Endothelial cell of umbilical vein (primary cell): ENCODE measurements at regions of chr4 and their contacts with region 1.

Region 1: DNA sequence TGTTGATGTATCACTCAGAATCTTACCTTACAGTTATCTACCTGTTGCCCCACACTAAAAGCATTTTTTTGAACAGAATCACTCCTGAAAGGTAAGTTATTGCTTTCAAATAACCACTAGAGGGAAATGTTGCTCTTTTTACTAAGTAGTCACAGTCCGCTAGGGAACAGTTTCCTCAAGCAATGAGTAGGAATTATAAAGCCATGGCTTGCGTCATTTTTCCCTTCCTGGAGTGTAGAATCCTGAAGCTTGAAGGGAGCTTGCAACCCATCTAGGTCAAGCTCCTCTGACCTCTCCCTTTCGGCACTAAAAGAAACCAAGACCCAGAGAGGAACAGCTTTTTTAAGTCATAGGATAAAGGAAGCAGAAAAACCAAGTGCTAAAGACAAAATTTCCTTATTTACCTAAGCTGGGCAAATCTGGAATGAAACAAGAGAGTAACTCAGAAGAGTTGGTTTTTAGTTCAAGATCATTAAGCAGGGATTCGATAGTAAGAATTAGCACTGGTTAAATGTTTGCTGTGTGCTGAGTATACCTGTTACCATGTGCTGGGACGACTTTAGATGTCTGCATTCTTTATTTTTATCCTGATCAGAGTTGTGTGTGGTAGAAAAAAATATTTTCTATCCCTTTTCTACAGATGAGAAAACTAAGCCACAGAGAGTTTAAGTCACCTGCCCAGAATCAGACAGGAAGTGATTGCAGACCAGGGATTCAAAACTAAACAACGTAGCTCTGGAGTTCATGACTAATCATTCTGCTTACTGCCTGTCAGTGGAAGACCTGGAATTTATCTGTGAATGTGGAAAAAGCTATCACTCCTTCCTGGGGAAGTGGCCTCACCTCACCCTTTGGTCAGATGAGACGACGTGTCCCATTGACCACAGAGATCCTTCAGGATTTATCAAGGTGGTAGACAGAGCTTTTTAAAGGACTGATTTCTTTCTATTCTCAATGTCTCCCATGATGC is 631.5 kb downstream of the RAB28 start:
- DNase-seq: peak; percentile 49
- H3K4me3 ChIP-seq: no peak overlapping the region
- H3K27ac ChIP-seq: no peak overlapping the region
- H3K4me1 ChIP-seq: no peaks in the 10 kb centered on the region
- H3K27me3 ChIP-seq: no peaks in the 10 kb centered on the region
- CTCF ChIP-seq: peak in 1 of 2 donors; percentile 25
- POLR2A ChIP-seq: no peak

Region 2: GRCh38 chr4:13541720-13542576 is 689.3 kb after region 1 on chr4:
- CTCF ChIA-PET with region 1: interaction called, 27 read pairs
- POLR2A ChIA-PET with region 1: no interaction called
- dilution Hi-C with region 1: no loop called
- intact Hi-C with region 1: no loop called
- DNase-seq: no peak
- H3K4me3 ChIP-seq: no peak overlapping the region
- H3K27ac ChIP-seq: no peak overlapping the region
- H3K4me1 ChIP-seq: peaks cover 4% of the 10 kb centered on the region
- H3K27me3 ChIP-seq: peaks cover 87 to 95% of the 10 kb centered on the region in 2 experiments
- CTCF ChIP-seq: peak in 1 of 2 donors; percentile 31
- POLR2A ChIP-seq: no peak